ENCODE measurements at regions of chr11 and their contacts with region 1.

Region 1: DNA sequence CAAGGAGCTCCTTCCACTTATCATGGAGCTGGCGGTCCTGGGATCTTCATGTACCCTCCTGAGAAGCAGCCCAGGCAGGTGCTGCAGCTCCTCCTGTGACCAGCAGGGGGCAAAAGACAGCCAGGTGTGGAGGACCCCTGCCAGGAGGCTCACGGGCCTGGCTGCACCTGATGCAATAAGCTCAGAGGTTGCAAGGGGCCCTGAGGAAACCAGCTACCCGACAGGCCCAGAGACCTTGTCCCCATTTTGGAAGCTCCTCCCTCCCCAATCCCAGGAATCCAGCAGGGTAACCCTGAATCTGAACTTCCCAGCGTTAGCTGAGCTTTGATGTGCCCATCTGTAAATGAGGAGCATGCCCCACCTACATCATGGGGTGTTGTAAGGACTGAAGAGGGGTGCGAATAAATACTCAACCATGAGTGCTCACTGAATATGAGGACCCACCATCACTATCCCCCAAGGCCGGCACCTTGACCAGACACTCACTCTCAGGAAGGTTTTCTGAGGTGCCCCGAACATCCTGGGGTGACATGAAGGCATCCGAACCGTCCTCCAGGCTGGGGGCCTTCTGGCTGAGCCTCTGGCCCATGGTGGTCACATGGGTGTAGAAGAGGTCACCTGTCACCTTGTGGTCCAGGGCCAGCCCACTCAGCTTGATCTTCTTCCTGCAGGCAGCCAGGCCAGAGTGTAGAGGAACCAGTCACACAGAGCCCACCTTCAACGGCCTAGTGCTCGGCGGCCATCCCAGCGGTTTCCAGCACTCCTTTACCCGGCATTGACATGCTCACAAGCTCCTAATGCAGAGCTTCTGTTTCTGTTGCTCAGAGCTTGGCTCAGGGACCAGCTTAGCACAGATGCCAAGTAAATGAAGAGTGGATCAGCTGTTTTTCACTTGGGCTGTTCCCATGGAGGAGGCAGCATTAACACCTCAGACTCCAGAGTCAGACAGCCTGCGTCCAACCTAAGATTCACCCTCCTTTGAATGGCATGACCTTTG is 21.7 kb downstream of the SLC43A1 start:
- DNase-seq: peak; percentile 77
- ATAC-seq: peak; percentile 96
- H3K4me3 ChIP-seq: no peak overlapping the region
- H3K4me3 Mint-ChIP-seq: no peak overlapping the region
- H3K27ac ChIP-seq: no peak overlapping the region
- H3K27ac Mint-ChIP-seq: no peak overlapping the region
- H3K4me1 ChIP-seq: no peaks in the 10 kb centered on the region
- H3K4me1 Mint-ChIP-seq: peaks cover 2% of the 10 kb centered on the region
- H3K27me3 ChIP-seq: no peaks in the 10 kb centered on the region
- H3K27me3 Mint-ChIP-seq: no peaks in the 10 kb centered on the region
- CTCF ChIP-seq: peak; percentile 97

Region 2: DNA sequence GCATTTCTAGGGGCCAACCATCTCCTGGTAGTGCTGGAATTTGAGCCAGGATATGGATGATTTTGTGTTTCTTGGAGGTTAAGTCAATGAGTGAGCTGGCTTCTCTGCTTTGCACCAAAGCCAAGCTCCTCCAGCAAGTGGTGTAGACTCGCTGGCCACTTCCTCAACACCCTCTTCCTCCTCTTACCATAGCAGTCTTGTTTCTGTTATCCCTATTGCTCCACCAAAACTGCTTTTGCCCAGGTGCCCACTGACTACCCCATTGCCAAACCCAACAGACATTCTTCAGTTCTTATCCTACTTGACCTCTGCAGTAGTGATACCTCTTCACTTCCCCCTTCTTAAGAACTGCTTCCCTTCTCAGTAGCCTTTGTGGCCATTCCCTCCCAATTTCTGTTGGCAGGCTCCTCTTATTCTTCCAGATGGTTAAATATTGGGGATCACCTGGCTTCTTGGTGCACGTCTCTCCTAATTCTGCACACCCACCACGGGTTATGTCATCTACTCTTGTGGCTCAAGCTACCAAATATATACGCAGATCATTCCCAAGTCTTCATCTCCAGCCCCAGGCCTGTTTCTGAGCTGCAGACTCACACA is 96.3 kb before region 1 on chr11:
- CTCF ChIA-PET with region 1: no interaction called
- POLR2A ChIA-PET with region 1: interaction called, 15 read pairs
- intact Hi-C with region 1: no loop called
- DNase-seq: no peak
- ATAC-seq: no peak
- H3K4me3 ChIP-seq: no peak overlapping the region
- H3K4me3 Mint-ChIP-seq: no peak overlapping the region
- H3K27ac ChIP-seq: no peak overlapping the region
- H3K27ac Mint-ChIP-seq: no peak overlapping the region
- H3K4me1 ChIP-seq: no peaks in the 10 kb centered on the region
- H3K4me1 Mint-ChIP-seq: no peaks in the 10 kb centered on the region
- H3K27me3 ChIP-seq: no peaks in the 10 kb centered on the region
- H3K27me3 Mint-ChIP-seq: no peaks in the 10 kb centered on the region
- CTCF ChIP-seq: no peak

Region 3: DNA sequence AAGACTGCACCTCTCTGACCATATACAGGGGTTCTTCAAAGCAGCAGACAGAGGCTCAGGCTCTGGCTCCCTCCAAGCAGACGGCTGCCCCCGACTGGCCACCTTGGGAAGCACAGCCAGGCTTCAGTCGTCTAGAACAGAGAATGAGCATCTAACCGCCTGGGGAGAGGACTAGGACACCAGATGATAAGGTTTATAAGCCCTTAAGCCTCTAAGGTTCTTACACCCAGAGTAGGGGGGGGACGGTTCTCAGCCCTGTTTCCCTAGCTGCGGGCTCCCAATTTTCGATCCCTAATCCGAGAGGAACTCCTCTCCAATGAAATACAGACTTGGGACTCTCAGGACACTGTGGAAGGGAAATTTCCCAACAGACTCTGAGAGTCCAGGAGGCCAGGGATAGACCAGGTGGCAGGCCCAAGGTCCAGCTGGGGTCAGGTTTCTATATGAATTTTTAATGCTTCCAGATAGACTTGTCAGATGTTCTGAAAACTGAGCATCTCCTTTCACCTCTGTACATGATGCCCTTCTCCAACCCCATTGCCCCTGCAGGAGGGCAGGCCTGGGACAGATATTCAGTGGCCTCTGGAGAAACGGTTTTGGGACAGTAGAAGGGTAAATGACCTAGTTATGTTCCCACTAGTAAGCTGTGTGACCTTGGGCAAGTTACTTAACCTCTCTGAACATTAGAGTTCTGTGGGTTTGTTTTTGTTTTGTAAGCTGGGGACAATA is 13.2 kb before region 1 on chr11:
- CTCF ChIA-PET with region 1: interaction called, 80 read pairs
- POLR2A ChIA-PET with region 1: no interaction called
- intact Hi-C with region 1: no loop called
- DNase-seq: peak; percentile 52
- ATAC-seq: peak; percentile 22
- H3K4me3 ChIP-seq: no peak overlapping the region
- H3K4me3 Mint-ChIP-seq: peak overlapping the region; percentile 61
- H3K27ac ChIP-seq: no peak overlapping the region
- H3K27ac Mint-ChIP-seq: no peak overlapping the region
- H3K4me1 ChIP-seq: peaks cover 46 to 53% of the 10 kb centered on the region in 2 donors
- H3K4me1 Mint-ChIP-seq: peaks cover 60% of the 10 kb centered on the region
- H3K27me3 ChIP-seq: peaks cover 0 to 22% (median 9%) of the 10 kb centered on the region in 4 experiments
- H3K27me3 Mint-ChIP-seq: peaks cover 5% of the 10 kb centered on the region
- CTCF ChIP-seq: peak; percentile 63

Region 4: GRCh38 chr11:57515332-57516060 is 21.7 kb after region 1 on chr11 and contains the start of gene SLC43A1:
- CTCF ChIA-PET with region 1: interaction called, 47 read pairs
- POLR2A ChIA-PET with region 1: interaction called, 4 read pairs
- intact Hi-C with region 1: loop called (anchors 2 kb)
- DNase-seq: peak; percentile 46
- ATAC-seq: peak; percentile 34
- H3K4me3 ChIP-seq: peak within 1 kb of the TSS; percentile 57 to 93 (median 81)
- H3K4me3 Mint-ChIP-seq: peak within 1 kb of the TSS; percentile 97
- H3K27ac ChIP-seq: peak within 1 kb of the TSS in 1 of 2 donors; percentile 34
- H3K27ac Mint-ChIP-seq: peak within 1 kb of the TSS; percentile 73
- H3K4me1 ChIP-seq: peaks cover 6 to 22% of the 10 kb centered on the region in 2 donors
- H3K4me1 Mint-ChIP-seq: peaks cover 30% of the 10 kb centered on the region
- H3K27me3 ChIP-seq: no peaks in the 10 kb centered on the region
- H3K27me3 Mint-ChIP-seq: no peaks in the 10 kb centered on the region
- CTCF ChIP-seq: no peak
- total RNA-seq, gene SLC43A1: 3.7 and 5.9 TPM in 2 replicates

Region 5: DNA sequence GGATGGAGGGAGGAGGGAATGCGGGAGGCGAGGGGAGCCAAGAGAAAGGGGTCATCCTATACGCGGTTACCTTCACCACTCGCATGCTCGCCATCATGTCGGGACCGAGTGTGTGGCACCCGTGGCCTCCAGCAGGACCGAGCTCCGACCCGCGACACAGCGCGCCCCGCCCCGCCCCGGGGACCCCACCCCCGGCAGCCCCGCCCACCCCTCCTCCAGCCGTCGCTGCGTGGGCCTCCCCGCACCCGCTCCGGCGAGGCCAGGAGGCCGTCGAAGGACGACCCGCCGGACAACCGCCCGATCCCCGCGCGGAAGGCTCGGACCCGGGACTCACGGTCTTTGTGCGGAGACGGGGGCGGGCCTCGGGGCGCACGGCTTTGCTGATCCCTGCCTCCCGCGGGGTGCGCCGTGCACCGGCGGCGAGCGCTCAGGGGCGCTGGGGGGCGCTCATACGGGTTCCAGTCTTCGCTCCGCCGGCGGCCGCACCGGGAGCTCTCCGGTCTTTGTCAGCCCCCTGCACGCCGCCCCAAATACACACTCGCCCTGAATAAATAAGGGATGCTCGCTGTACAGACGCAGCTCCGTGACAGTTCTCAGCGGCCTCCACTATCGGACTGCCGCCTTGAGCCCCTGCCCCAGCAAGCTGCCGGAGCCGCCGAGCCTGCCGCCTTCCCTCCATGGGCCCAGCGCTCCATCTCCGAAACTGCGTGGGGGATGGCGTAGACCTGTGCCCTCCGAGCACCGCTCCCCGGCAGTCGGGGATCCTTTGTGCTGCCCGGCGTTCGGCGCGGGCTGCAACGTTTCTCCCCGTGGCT is 73.9 kb after region 1 on chr11 and contains the start of gene UBE2L6:
- CTCF ChIA-PET with region 1: interaction called, 13 read pairs
- POLR2A ChIA-PET with region 1: no interaction called
- intact Hi-C with region 1: no loop called
- DNase-seq: peak; percentile 82
- ATAC-seq: peak; percentile 69
- H3K4me3 ChIP-seq: peak within 1 kb of the TSS; percentile 83 to 99 (median 98)
- H3K4me3 Mint-ChIP-seq: peak within 1 kb of the TSS; percentile 99
- H3K27ac ChIP-seq: peak within 1 kb of the TSS; percentile 83 to 92
- H3K27ac Mint-ChIP-seq: peak within 1 kb of the TSS; percentile 99
- H3K4me1 ChIP-seq: peaks cover 18 to 26% of the 10 kb centered on the region in 2 donors
- H3K4me1 Mint-ChIP-seq: peaks cover 36% of the 10 kb centered on the region
- H3K27me3 ChIP-seq: no peaks in the 10 kb centered on the region
- H3K27me3 Mint-ChIP-seq: no peaks in the 10 kb centered on the region
- CTCF ChIP-seq: peak; percentile 95
- total RNA-seq, gene UBE2L6: 66.3 and 70.7 TPM in 2 replicates